Activated CD8-positive, alpha-beta T cell treated with anti-CD3 and anti-CD28 coated beads for 36 hours (primary cell): ENCODE measurements at regions of chr15 and their contacts with region 1.

Region 1: GRCh38 chr15:99507504-99508310 is 58.1 kb upstream of the MEF2A start:
- DNase-seq: peak; percentile 33
- ATAC-seq: no peak
- H3K4me3 Mint-ChIP-seq: no peak overlapping the region
- H3K27ac Mint-ChIP-seq: no peak overlapping the region
- H3K4me1 Mint-ChIP-seq: peaks cover 46% of the 10 kb centered on the region
- H3K27me3 Mint-ChIP-seq: no peaks in the 10 kb centered on the region
- CTCF ChIP-seq: no peak

Region 2: DNA sequence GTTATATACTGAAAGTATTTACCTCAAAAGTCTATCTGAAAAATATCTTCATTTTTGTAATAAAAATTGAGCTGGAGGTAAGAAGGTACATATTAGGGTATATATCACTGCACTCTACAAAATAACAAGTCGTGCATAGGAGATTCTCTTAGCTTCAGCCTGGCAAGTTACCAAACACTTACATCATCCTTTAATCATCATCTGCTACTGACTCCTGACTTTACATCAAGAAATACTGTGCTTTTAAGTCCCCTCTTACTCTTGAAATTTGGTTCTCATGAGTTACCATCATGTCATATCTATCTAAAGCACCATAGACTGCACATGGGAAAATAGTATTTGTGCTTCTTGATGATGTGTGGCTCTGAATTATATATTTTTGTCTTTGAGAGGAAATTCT is 174.7 kb after region 1 on chr15:
- CTCF ChIA-PET with region 1: no interaction called
- POLR2A ChIA-PET with region 1: interaction called, 3 read pairs
- intact Hi-C with region 1: loop called (anchors 10 kb)
- DNase-seq: no peak
- ATAC-seq: peak; percentile 38
- H3K4me3 Mint-ChIP-seq: no peak overlapping the region
- H3K27ac Mint-ChIP-seq: peak overlapping the region; percentile 47
- H3K4me1 Mint-ChIP-seq: peaks cover 21% of the 10 kb centered on the region
- H3K27me3 Mint-ChIP-seq: no peaks in the 10 kb centered on the region
- CTCF ChIP-seq: no peak